Activated naive CD4-positive, alpha-beta T cell treated with anti-CD3 and anti-CD28 coated beads for 36 hours (primary cell): ENCODE measurements at regions of chr3 and their contacts with region 1.

Region 1: DNA sequence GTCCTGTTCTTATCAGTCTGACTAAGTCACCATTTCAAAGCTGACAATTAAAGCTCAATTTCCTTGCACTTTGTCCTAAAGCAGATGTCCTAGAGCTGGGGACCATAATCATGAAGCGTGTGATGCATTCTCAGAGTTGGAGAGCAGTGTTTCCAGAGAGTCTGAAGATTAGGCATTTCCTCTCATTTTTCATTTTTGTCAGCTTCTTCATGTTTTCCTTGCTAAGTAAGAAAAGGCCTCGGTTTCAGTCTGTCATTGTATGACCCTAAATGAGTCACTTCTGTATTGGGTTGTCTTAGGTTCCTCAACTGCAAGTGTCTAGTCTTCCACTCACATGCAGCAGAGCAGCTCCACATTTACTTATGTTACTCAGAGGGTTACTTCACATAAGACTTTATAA is 257.2 kb upstream of the TPRG1 start:
- DNase-seq: peak; percentile 36
- H3K4me3 Mint-ChIP-seq: no peak overlapping the region
- H3K27ac Mint-ChIP-seq: peak overlapping the region; percentile 85
- H3K4me1 Mint-ChIP-seq: peaks cover 47% of the 10 kb centered on the region
- H3K27me3 Mint-ChIP-seq: peaks cover 2% of the 10 kb centered on the region

Region 2: DNA sequence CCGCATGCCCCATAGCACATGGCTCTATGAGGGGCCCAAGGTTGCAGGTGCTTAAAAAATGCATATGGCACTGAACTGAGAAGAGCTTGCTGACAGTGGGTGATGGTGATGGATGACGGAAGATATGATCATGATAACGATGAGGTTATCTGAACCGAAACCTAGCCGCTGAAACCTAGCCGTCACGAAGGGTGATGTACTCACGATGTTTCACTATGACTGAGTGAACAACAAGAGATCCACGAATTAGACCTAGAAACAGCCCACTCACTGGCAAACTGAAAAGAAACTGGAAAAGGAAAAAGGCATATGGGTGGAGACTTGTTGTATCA is 1111.7 kb before region 1 on chr3:
- CTCF ChIA-PET with region 1: no interaction called
- intact Hi-C with region 1: loop called (anchors 1 kb)
- DNase-seq: peak; percentile 89
- H3K4me3 Mint-ChIP-seq: peak overlapping the region; percentile 1
- H3K27ac Mint-ChIP-seq: peak overlapping the region; percentile 79
- H3K4me1 Mint-ChIP-seq: peaks cover 95% of the 10 kb centered on the region
- H3K27me3 Mint-ChIP-seq: no peaks in the 10 kb centered on the region

Region 3: GRCh38 chr3:188286087-188286513 is 628.5 kb before region 1 on chr3:
- CTCF ChIA-PET with region 1: no interaction called
- intact Hi-C with region 1: loop called (anchors 1 kb)
- DNase-seq: peak; percentile 32
- H3K4me3 Mint-ChIP-seq: no peak overlapping the region
- H3K27ac Mint-ChIP-seq: no peak overlapping the region
- H3K4me1 Mint-ChIP-seq: peaks cover 45% of the 10 kb centered on the region
- H3K27me3 Mint-ChIP-seq: no peaks in the 10 kb centered on the region

Region 4: GRCh38 chr3:188362405-188362831 is 552.1 kb before region 1 on chr3:
- CTCF ChIA-PET with region 1: no interaction called
- intact Hi-C with region 1: no loop called
- DNase-seq: no peak
- H3K4me3 Mint-ChIP-seq: no peak overlapping the region
- H3K27ac Mint-ChIP-seq: no peak overlapping the region
- H3K4me1 Mint-ChIP-seq: peaks cover 40% of the 10 kb centered on the region
- H3K27me3 Mint-ChIP-seq: no peaks in the 10 kb centered on the region

Region 5: GRCh38 chr3:188400494-188401243 is 513.9 kb before region 1 on chr3:
- CTCF ChIA-PET with region 1: interaction called, 8 read pairs
- intact Hi-C with region 1: loop called (anchors 2 kb)
- DNase-seq: peak; percentile 60
- H3K4me3 Mint-ChIP-seq: no peak overlapping the region
- H3K27ac Mint-ChIP-seq: peak overlapping the region; percentile 43
- H3K4me1 Mint-ChIP-seq: peaks cover 70% of the 10 kb centered on the region
- H3K27me3 Mint-ChIP-seq: no peaks in the 10 kb centered on the region

Region 6: DNA sequence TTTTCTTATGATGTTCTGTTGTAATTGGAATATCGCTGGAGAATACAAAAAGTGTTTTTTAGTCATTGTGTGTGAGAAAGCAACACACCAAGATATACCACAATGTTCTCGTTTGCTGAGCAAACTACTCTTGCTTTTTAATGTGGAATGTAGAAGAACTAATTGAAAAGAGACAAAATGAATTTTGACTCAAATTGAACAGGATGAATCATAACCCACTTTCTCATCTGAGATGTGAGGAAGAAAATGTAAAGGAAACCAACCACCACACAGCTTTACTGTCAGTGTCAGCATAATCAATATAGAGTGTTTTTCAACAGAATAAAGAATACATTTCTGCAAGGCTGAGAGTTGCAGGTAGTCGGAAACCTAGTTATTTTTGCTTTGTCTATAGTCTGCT is 191.6 kb before region 1 on chr3:
- CTCF ChIA-PET with region 1: no interaction called
- intact Hi-C with region 1: loop called (anchors 1 kb)
- DNase-seq: no peak
- H3K4me3 Mint-ChIP-seq: no peak overlapping the region
- H3K27ac Mint-ChIP-seq: no peak overlapping the region
- H3K4me1 Mint-ChIP-seq: peaks cover 26% of the 10 kb centered on the region
- H3K27me3 Mint-ChIP-seq: peaks cover 2% of the 10 kb centered on the region

Region 7: GRCh38 chr3:189132231-189132707 is 217.7 kb after region 1 on chr3:
- CTCF ChIA-PET with region 1: no interaction called
- intact Hi-C with region 1: loop called (anchors 1 kb)
- DNase-seq: peak; percentile 91
- H3K4me3 Mint-ChIP-seq: peak overlapping the region; percentile 41
- H3K27ac Mint-ChIP-seq: peak overlapping the region; percentile 76
- H3K4me1 Mint-ChIP-seq: peaks cover 21% of the 10 kb centered on the region
- H3K27me3 Mint-ChIP-seq: no peaks in the 10 kb centered on the region